CD4-positive, alpha-beta T cell (primary cell): ENCODE measurements at regions of chr1 and their contacts with region 1.

Region 1: GRCh38 chr1:247103859-247104591 is at the start of gene ZNF669:
- DNase-seq: peak; percentile 81 to 95 (median 88)
- ATAC-seq: peak; percentile 98
- H3K4me3 ChIP-seq: peak within 1 kb of the TSS; percentile 97
- H3K4me3 Mint-ChIP-seq: peak within 1 kb of the TSS; percentile 87
- H3K27ac ChIP-seq: peak within 1 kb of the TSS; percentile 64 to 74
- H3K27ac Mint-ChIP-seq: peak within 1 kb of the TSS; percentile 82
- H3K4me1 ChIP-seq: peaks cover 15% of the 10 kb centered on the region
- H3K4me1 Mint-ChIP-seq: peaks cover 20% of the 10 kb centered on the region
- H3K27me3 ChIP-seq: peaks cover 12 to 17% of the 10 kb centered on the region in 2 experiments
- H3K27me3 Mint-ChIP-seq: peaks cover 33% of the 10 kb centered on the region
- CTCF ChIP-seq: no peak
- total RNA-seq, gene ZNF669: 13.2 to 15.1 TPM

Region 2: DNA sequence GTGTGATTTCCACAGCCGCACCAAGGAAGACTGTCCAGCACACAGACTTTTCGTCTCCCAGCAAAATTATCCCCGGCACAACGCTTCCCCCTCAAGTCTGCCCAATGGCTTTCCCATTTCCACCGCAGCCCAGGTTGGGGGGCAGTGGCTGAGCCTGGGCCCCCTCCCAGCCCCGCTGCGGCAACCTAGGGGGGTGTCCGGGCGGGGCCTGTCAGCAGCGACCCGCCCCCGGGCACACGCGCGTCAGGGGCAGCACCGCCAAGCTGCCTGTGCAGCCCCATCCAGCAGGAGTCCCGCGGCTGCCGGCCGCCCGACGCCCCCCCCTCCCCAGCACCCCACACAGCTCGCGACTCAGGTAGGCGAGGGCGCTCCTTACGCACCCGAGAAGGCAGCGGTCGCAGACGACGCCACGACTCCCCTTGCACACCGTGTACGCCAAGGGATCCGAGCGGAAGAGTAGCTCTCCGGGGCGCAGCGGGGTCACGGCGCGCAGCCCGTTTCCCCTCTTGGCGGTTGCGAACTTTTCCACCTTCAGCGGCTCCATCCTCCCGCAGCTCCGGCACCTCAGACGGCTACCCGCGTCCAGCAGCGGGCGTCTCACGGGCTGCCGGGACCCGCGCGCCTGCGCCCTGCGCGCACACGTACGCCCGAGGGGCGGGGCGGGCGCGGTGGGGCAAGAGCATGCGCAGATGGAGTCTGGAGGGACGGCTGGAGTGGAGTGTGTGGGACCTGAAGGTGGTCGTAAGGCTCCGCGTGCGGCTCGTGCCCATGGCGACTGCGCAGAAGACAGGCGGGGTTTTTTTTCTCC is 597.1 kb before region 1 on chr1 and contains the start of gene SMYD3:
- CTCF ChIA-PET with region 1: no interaction called
- POLR2A ChIA-PET with region 1: no interaction called
- intact Hi-C with region 1: loop called in 1 of 2 experiments (anchors 5 kb)
- DNase-seq: peak; percentile 57 to 93 (median 73)
- ATAC-seq: peak; percentile 85
- H3K4me3 ChIP-seq: peak within 1 kb of the TSS; percentile 81
- H3K4me3 Mint-ChIP-seq: peak within 1 kb of the TSS; percentile 94
- H3K27ac ChIP-seq: peak within 1 kb of the TSS in 1 of 2 donors; percentile 27
- H3K27ac Mint-ChIP-seq: peak within 1 kb of the TSS; percentile 90
- H3K4me1 ChIP-seq: peaks cover 20% of the 10 kb centered on the region
- H3K4me1 Mint-ChIP-seq: peaks cover 37% of the 10 kb centered on the region
- H3K27me3 ChIP-seq: no peaks in the 10 kb centered on the region
- H3K27me3 Mint-ChIP-seq: no peaks in the 10 kb centered on the region
- CTCF ChIP-seq: no peak
- total RNA-seq, gene SMYD3: 18.8 to 19.6 TPM

Region 3: GRCh38 chr1:247070645-247071044 is 33.4 kb before region 1 on chr1:
- CTCF ChIA-PET with region 1: no interaction called
- POLR2A ChIA-PET with region 1: no interaction called
- intact Hi-C with region 1: loop called in 1 of 2 experiments (anchors 5 kb)
- DNase-seq: no peak
- ATAC-seq: no peak
- H3K4me3 ChIP-seq: no peak overlapping the region
- H3K4me3 Mint-ChIP-seq: no peak overlapping the region
- H3K27ac ChIP-seq: no peak overlapping the region
- H3K27ac Mint-ChIP-seq: no peak overlapping the region
- H3K4me1 ChIP-seq: no peaks in the 10 kb centered on the region
- H3K4me1 Mint-ChIP-seq: no peaks in the 10 kb centered on the region
- H3K27me3 ChIP-seq: no peaks in the 10 kb centered on the region
- H3K27me3 Mint-ChIP-seq: no peaks in the 10 kb centered on the region
- CTCF ChIP-seq: no peak

Region 4: DNA sequence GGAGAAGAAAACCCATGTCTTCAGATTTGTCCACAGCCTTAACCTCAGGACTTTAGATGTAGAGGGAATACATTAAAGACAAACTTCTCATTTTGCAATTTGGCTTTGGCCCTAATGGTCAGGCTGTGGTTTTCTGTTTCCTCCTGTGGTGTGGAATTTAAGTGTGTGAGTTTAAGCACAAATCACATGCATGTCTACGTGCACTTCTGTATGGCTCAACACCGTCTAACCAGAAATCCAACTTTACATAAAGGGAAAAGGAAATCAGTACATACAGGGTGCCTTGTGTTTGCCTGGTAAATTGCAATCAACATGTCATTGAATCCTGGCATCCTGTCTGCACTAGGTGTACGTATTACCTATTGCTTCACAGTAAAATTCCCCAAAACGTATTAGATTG is 69.0 kb after region 1 on chr1:
- CTCF ChIA-PET with region 1: no interaction called
- POLR2A ChIA-PET with region 1: no interaction called
- intact Hi-C with region 1: loop called in 1 of 2 experiments (anchors 5 kb)
- DNase-seq: peak in 2 of 14 experiments; percentile 27 to 29
- ATAC-seq: no peak
- H3K4me3 ChIP-seq: no peak overlapping the region
- H3K4me3 Mint-ChIP-seq: peak overlapping the region; percentile 66
- H3K27ac ChIP-seq: no peak overlapping the region
- H3K27ac Mint-ChIP-seq: no peak overlapping the region
- H3K4me1 ChIP-seq: peaks cover 4% of the 10 kb centered on the region
- H3K4me1 Mint-ChIP-seq: peaks cover 6% of the 10 kb centered on the region
- H3K27me3 ChIP-seq: no peaks in the 10 kb centered on the region
- H3K27me3 Mint-ChIP-seq: no peaks in the 10 kb centered on the region
- CTCF ChIP-seq: no peak

Region 5: GRCh38 chr1:247210376-247211117 is 106.5 kb after region 1 on chr1:
- CTCF ChIA-PET with region 1: no interaction called
- POLR2A ChIA-PET with region 1: interaction called, 8 read pairs
- intact Hi-C with region 1: loop called (anchors 5 to 10 kb)
- DNase-seq: peak; percentile 83 to 97 (median 92)
- ATAC-seq: peak; percentile 99
- H3K4me3 ChIP-seq: peak overlapping the region; percentile 79
- H3K4me3 Mint-ChIP-seq: peak overlapping the region; percentile 98
- H3K27ac ChIP-seq: peak overlapping the region; percentile 63 to 79
- H3K27ac Mint-ChIP-seq: peak overlapping the region; percentile 96
- H3K4me1 ChIP-seq: peaks cover 39% of the 10 kb centered on the region
- H3K4me1 Mint-ChIP-seq: peaks cover 76% of the 10 kb centered on the region
- H3K27me3 ChIP-seq: no peaks in the 10 kb centered on the region
- H3K27me3 Mint-ChIP-seq: no peaks in the 10 kb centered on the region
- CTCF ChIP-seq: no peak

Region 6: DNA sequence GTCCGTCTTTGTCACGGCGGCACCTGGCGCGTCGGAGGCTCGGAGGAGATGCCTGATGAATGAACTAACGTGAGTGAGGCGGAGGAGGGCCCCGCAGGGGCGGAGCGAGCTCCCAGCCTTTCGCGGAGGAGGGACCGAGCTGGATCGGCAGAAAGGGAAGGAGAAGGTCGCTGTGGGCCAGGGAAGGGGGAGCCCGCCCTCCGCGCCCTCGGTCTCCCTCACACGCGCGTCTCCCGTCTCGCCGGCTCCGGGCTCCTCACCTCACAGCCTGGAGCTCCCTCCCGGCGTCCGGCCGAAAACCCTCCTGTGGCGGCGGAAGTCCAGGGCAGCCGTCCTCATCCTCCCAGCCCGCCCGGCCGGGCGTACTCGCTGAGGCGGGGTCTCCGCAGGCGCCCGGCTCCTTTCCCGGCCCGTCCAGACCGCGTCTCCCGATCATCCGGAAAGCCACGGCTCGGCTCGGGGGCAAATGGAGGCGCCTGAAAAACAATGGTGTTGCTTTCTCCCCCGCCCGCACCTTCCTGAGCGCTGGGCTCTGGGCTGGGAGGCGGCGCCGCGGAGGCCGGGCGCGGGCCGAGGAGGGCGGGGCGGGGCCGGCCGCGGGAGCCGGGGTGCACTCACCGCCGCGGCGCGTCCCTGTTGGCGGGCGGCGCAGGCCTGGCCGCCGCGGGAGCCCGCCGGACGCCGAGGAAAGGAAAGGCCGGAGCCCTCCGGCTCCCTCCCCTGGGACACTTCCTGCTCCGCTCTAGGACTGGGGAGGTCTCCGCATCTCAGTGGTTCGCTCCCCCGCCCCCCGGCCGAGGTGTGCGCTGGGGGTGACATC is 227.4 kb after region 1 on chr1 and contains the start of gene ZNF496:
- CTCF ChIA-PET with region 1: no interaction called
- POLR2A ChIA-PET with region 1: no interaction called
- intact Hi-C with region 1: loop called in 1 of 2 experiments (anchors 5 kb)
- DNase-seq: peak; percentile 35 to 80 (median 60)
- ATAC-seq: peak; percentile 75
- H3K4me3 ChIP-seq: peak within 1 kb of the TSS; percentile 85
- H3K4me3 Mint-ChIP-seq: peak within 1 kb of the TSS; percentile 97
- H3K27ac ChIP-seq: peak within 1 kb of the TSS in 1 of 2 donors; percentile 9
- H3K27ac Mint-ChIP-seq: peak within 1 kb of the TSS; percentile 61
- H3K4me1 ChIP-seq: peaks cover 21% of the 10 kb centered on the region
- H3K4me1 Mint-ChIP-seq: peaks cover 50% of the 10 kb centered on the region
- H3K27me3 ChIP-seq: no peaks in the 10 kb centered on the region
- H3K27me3 Mint-ChIP-seq: no peaks in the 10 kb centered on the region
- CTCF ChIP-seq: no peak
- total RNA-seq, gene ZNF496: 15.8 to 19.9 TPM